AG04449 (cell line): ENCODE measurements at regions of chr22 and their contacts with region 1.

Region 1: GRCh38 chr22:28800308-28801077 is at the start of gene XBP1:
- DNase-seq: peak; percentile 63
- H3K4me3 ChIP-seq: peak within 1 kb of the TSS; percentile 59
- CTCF ChIP-seq: no peak

Region 2: GRCh38 chr22:28772633-28773460 is 27.6 kb before region 1 on chr22 and contains the start of gene CCDC117:
- CTCF ChIA-PET with region 1: interaction called, 4 read pairs
- POLR2A ChIA-PET with region 1: interaction called, 15 read pairs
- DNase-seq: peak; percentile 74
- H3K4me3 ChIP-seq: peak within 1 kb of the TSS; percentile 82
- CTCF ChIP-seq: no peak